HCT116 (cell line): ENCODE measurements at regions of chr19 and their contacts with region 1.

Region 1: GRCh38 chr19:46265217-46265828 is 31.5 kb upstream of the HIF3A start:
- DNase-seq: peak; percentile 77
- ATAC-seq: peak; percentile 87
- H3K4me3 ChIP-seq: no peak overlapping the region
- H3K27ac ChIP-seq: no peak overlapping the region
- H3K4me1 ChIP-seq: peaks cover 15 to 16% of the 10 kb centered on the region in 2 experiments
- H3K27me3 ChIP-seq: peaks cover 36% of the 10 kb centered on the region
- CTCF ChIP-seq: peak; percentile 65 to 96 (median 82)
- POLR2A ChIP-seq: no peak
- RAD21 ChIP-seq: peak; percentile 95

Region 2: GRCh38 chr19:46030812-46031550 is 234.3 kb before region 1 on chr19:
- CTCF ChIA-PET with region 1: interaction called, 12 read pairs
- POLR2A ChIA-PET with region 1: interaction called, 3 read pairs
- RAD21 ChIA-PET with region 1: no interaction called
- intact Hi-C with region 1: loop called (anchors 2 kb)
- DNase-seq: no peak
- ATAC-seq: no peak
- H3K4me3 ChIP-seq: no peak overlapping the region
- H3K27ac ChIP-seq: no peak overlapping the region
- H3K4me1 ChIP-seq: no peaks in the 10 kb centered on the region
- H3K27me3 ChIP-seq: no peaks in the 10 kb centered on the region
- CTCF ChIP-seq: no peak
- POLR2A ChIP-seq: no peak
- RAD21 ChIP-seq: no peak

Region 3: DNA sequence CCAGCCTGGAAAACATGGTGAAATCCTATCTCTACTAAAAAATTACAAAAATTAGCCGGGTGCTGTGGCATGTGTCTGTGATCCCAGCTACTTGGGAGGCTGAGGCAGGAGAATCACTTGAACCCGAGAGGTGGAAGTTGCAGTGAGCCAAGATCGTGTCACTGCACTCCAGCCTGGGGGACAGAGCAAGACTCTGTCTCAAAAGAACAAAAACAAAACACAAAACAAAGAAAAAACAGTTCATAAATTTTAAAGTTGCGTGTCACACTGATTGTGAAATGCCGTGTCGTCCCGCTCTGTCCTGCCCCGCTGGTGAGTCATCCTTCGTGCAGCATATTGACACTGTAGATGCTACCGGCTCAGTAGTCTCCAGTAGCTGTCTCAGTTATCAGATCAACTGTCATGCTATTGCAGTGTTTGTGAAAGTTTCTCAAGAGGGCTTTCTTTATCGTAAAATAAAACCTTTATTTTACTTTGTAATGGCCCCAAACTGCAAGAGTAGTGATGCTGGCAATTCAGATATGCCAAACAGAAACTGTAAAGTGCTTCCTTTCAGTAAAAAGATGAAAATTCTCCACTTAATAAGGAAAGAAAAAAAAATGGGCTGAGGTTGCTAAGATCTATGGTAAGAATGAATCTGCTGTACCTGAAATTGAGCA is 72.2 kb before region 1 on chr19:
- CTCF ChIA-PET with region 1: interaction called, 9 read pairs
- POLR2A ChIA-PET with region 1: no interaction called
- RAD21 ChIA-PET with region 1: interaction called in 1 of 2 experiments, 4 read pairs
- intact Hi-C with region 1: loop called (anchors 1 kb)
- DNase-seq: no peak
- ATAC-seq: peak; percentile 77
- H3K4me3 ChIP-seq: peak overlapping the region in 1 of 2 experiments; percentile 14; a peak in 2 of 4 replicates
- H3K27ac ChIP-seq: no peak overlapping the region
- H3K4me1 ChIP-seq: peaks cover 4 to 16% of the 10 kb centered on the region in 2 experiments
- H3K27me3 ChIP-seq: peaks cover 31% of the 10 kb centered on the region; the same call in 1 of the 2 replicates
- CTCF ChIP-seq: no peak
- POLR2A ChIP-seq: no peak
- RAD21 ChIP-seq: no peak